ENCODE measurements at regions of chr1 and their contacts with region 1.

Region 1: DNA sequence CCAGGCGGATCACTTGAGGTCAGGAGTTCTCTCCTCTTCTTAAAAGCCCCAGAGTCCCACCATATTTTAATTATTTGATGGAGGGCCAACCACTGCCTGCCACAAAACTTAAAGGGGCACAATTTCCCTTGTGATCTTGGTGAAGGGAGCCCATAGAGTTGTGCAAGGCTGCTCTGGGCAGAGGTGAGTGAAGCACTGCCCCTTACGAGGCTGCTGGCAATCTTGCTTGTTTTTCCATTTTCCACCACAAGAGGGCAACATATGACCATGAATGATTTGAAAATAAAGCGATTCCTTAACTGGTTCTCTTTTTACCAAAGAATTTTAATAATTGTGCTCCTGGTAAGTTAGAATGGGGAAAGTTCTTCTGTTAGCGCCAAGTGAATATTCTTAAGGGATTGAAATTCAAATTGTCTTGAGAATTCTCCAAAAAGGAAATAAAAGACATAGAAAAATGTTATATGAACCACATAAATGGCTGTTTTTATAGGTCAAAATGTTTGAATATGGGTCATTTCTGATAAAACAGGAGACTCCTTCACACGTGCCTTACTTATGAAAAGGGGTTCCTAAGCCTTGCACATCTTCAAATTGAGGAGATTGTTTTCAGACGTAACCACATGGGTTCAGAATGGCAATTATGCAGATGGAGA is 22.7 kb downstream of the PGM1 start:
- DNase-seq: no peak
- ATAC-seq: peak; percentile 62

Region 2: DNA sequence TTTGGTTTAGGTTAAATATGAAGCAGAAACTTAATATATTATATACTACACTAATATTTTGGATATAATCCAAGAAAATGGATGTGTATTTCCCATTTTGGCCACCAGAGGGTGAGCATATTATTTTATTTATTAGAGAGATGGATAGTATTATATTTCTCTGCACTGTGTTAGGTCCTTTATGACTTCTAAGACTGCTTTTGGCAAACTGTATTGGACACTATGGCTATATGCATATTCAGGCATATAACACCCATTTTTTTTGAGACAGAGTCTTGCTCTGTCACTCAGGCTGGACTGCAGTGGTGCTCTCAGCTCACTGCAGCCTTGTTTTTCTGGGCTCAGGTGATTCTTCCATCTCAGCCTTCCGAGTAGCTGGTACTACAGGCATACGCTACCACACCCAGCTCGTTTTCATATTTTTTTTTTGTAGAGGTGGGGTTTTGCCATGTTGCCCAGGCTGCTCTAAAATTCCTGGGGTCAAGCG is 40.5 kb before region 1 on chr1:
- intact Hi-C with region 1: loop called (anchors 5 kb)
- DNase-seq: no peak
- ATAC-seq: no peak

Region 3: GRCh38 chr1:63674238-63674864 is 58.5 kb after region 1 on chr1:
- intact Hi-C with region 1: loop called (anchors 5 kb)
- DNase-seq: peak; percentile 79
- ATAC-seq: peak; percentile 91